GM10248 (cell line): ENCODE measurements at regions of chr4 and their contacts with region 1.

Region 1: DNA sequence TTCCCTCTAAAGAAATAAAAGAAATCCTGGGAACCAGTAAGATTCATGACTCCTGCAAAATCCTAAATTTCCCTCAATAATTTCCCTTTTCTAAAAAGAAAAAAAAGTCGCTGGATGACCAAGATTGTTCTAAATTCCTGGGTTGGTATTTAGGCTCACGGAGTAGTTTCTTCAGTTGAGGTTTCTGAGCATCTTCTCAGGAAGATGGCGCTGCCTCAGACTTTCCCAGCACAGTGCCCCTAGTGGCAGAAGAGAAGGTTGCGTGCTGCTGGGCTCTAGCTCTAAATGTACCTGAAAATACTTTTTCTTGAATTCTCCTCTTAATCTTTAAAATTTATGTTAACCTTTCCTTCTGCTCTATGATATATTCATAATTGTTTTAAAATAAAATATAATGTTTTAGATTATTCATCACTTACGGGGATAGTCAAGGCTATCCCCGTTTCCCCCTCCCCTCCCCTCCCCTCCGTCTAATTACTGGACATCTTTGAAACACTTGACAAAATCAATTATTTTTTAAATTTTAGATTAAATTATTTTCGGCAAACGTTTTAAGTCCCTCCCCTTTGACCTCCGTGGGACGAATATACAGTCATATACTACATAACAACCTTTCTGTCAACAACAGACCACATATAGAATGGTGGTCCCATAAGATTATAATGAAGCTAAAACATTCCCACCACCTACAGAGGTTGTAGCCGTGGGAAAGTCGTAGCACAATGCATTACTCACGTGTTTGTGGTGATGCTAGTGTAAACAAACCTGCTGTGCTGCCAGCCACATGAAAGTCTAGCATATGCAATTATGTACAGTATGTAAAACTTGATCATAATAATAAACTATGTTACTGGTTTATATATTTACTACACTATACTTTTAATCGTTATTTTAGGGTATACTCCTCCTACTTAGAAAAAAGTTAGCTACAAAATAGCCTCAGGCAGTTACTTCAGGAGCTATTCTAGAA is 41.0 kb upstream of the GATB start:
- DNase-seq: peak; percentile 48
- CTCF ChIP-seq: peak; percentile 78

Region 2: GRCh38 chr4:151434183-151434860 is 367.5 kb before region 1 on chr4:
- CTCF ChIA-PET with region 1: no interaction called
- POLR2A ChIA-PET with region 1: no interaction called
- DNase-seq: no peak
- CTCF ChIP-seq: no peak

Region 3: GRCh38 chr4:151718984-151719955 is 82.6 kb before region 1 on chr4:
- CTCF ChIA-PET with region 1: no interaction called
- POLR2A ChIA-PET with region 1: no interaction called
- DNase-seq: no peak
- CTCF ChIP-seq: no peak

Region 4: DNA sequence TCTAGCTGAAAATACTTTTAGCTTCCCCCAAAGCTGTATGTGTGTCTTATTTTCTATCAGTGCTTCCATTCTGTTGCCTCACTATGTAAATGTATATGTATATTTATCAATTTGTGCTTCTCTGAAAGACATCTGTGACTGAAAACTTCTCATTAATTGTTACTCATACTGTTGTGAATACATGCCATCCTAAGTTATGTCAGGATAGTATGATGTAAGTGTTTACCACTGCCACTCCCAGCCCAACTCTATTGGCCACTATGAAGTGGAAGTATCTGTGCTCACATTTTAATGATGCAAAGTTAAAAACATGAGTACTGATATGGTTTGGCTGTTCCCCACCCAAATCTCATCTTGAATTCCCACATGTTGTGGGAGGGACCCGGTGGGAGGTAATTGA is 65.5 kb before region 1 on chr4:
- CTCF ChIA-PET with region 1: no interaction called
- POLR2A ChIA-PET with region 1: no interaction called
- DNase-seq: no peak
- CTCF ChIP-seq: no peak

Region 5: DNA sequence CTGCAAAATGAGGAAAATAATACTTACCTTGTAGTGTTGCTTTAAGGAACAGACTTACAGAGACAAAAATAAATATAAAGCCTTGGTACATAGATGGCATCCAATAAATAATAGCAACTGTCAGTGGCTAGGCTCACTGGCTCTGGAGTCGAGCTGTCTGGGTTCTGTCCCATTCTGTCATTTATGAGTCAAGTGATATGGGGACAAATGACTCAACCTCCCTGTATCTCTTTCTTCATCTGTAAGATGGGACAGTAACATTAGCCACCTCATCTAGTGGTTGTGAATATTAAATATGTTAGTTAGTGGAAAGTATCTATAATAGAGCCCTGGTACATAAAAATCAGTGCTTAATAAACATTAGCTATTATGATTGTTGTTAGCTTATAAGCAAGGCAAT is 24.4 kb before region 1 on chr4:
- CTCF ChIA-PET with region 1: interaction called, 16 read pairs
- POLR2A ChIA-PET with region 1: no interaction called
- DNase-seq: no peak
- CTCF ChIP-seq: no peak

Region 6: DNA sequence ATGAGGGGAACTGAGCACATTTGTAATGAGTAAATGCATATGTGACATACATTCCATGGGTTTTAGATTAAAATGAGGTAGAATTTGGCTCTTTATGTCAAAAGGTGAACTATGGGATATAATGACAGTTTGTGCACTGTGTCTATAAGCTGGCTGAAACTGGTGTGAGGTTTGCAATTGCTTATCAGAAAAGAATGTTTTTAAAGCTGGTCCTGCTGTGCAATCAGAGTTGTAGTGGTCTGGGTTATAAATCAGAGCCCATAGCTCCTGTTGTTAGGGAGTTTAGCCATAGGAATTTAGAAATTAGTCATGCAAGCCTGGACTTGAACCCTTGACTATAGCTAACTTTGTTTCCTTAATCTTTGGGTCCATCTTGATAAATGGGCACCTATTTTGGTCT is 18.0 kb before region 1 on chr4:
- CTCF ChIA-PET with region 1: interaction called, 15 read pairs
- POLR2A ChIA-PET with region 1: no interaction called
- DNase-seq: no peak
- CTCF ChIP-seq: no peak

Region 7: DNA sequence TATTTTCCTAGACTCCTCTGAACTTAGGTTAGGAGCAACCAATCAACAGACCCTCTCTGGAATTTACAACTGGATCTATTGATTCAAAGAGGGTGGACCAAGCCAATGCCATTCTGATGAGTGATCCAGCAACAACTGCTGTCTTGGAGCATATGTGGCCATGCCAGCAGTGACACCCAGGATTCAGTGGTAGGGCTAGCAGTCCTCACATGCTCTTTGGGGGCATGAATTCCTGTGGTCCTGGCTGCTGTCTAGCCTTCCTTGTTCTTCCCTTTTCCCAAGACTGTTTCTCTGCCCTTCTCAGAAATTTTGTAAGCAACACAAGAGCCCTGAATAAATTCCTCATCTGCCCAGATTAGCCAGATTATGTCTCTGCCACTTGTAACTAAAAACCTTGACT is 20.5 kb after region 1 on chr4:
- CTCF ChIA-PET with region 1: interaction called, 21 read pairs
- POLR2A ChIA-PET with region 1: no interaction called
- DNase-seq: no peak
- CTCF ChIP-seq: no peak

Region 8: DNA sequence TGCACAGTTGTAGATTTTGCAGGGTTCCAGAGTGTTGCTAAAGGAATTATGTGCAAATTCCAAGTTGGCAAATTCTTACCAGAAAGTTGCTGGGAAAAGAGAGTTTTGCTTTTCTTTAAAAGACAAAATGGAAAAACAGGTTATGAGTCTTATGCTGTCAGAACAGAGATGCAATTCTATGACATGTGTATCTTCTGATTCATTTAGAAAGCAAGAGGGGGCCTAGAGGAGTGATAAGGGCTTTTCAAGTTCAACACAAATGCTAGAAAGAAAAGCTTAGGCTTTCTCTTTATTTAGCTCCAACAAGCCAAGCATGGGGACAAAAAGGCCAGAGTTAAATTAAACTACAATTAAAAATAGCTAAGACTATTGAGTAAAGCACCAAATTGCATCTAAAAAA is 31.3 kb after region 1 on chr4:
- CTCF ChIA-PET with region 1: interaction called, 12 read pairs
- POLR2A ChIA-PET with region 1: no interaction called
- DNase-seq: no peak
- CTCF ChIP-seq: no peak

Region 9: DNA sequence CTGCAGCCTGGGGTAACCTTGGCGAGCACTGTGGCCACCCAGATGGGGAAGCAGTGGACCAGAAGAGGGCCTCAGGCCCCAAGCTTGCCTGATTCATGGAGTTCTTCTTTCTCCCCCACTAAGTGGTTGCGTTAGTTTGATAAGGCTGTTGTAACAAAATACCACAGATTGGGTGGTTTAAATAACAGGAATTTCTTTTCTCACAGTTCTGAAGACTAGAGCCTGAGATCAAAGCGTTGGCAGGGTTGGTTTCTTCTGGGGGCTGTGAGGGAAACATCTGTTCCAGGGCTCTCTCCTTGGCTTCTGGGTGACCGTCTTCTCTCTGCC is 64.7 kb after region 1 on chr4:
- CTCF ChIA-PET with region 1: no interaction called
- POLR2A ChIA-PET with region 1: no interaction called
- DNase-seq: no peak
- CTCF ChIP-seq: no peak